Right ventricle myocardium inferior (tissue), 1 donor: ENCODE measurements at regions of chr15 and their contacts with region 1.

Region 1: GRCh38 chr15:87850916-87851315 is 405.6 kb downstream of the NTRK3 start:
- DNase-seq: no peak
- ATAC-seq: peak; percentile 94

Region 2: GRCh38 chr15:87949151-87949574 is 98.2 kb after region 1 on chr15:
- intact Hi-C with region 1: loop called (anchors 2 kb)
- DNase-seq: no peak
- ATAC-seq: peak; percentile 74

Region 3: GRCh38 chr15:87973501-87974215 is 122.7 kb after region 1 on chr15:
- intact Hi-C with region 1: no loop called
- DNase-seq: no peak
- ATAC-seq: no peak